ENCODE measurements at regions of chr1 and their contacts with region 1.

Region 1: GRCh38 chr1:181099152-181100014 is 10.9 kb downstream of the IER5 start:
- DNase-seq: no peak
- H3K4me3 ChIP-seq: no peak overlapping the region
- CTCF ChIP-seq: no peak

Region 2: GRCh38 chr1:181021811-181022434 is 77.5 kb before region 1 on chr1:
- CTCF ChIA-PET with region 1: no interaction called
- POLR2A ChIA-PET with region 1: interaction called, 10 read pairs
- DNase-seq: no peak
- H3K4me3 ChIP-seq: peak overlapping the region; percentile 83
- CTCF ChIP-seq: no peak

Region 3: DNA sequence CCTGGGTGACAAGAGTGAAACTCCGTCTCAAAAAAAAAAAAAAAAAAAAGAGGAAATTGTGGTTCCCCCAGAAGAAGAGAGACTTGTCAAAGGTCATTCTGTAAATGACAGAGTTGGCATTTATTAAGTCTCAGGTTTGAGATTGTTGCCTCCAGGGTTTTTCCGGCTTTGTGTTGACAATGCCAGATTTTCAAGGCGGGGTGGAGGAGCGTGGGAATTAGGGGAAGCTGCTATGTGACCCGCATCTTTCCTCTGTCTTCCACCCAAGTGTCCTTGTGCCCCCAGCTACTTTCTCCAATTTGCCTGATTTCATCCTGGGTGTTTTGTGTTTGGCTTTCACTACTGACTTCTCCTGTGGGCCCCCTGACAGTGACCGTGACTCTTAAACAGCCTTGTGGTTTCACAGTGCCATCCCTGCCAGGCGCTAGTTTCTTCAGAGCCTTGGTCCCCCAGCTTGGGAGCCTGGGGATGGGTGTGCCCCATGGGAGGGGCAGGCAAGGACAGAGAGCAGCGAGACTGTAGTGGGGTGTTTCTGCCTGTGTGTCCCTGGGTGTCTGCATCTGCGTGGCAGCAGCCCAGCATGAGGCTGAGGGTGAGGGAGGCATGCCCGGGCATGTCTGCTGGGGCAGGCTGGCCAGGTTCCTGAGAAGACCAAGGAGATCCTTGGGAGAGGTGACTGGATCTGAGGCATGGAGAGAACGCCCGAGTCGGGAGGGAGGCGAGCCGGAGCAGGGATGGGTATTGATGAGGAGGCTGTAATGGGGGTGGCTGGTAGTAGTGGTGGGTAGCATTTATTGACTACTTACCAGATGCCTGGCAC is 35.4 kb after region 1 on chr1:
- CTCF ChIA-PET with region 1: interaction called, 54 read pairs
- POLR2A ChIA-PET with region 1: interaction called, 30 read pairs
- DNase-seq: peak; percentile 68
- H3K4me3 ChIP-seq: no peak overlapping the region
- CTCF ChIP-seq: no peak